ENCODE measurements at regions of chr6 and their contacts with region 1.

Region 1: DNA sequence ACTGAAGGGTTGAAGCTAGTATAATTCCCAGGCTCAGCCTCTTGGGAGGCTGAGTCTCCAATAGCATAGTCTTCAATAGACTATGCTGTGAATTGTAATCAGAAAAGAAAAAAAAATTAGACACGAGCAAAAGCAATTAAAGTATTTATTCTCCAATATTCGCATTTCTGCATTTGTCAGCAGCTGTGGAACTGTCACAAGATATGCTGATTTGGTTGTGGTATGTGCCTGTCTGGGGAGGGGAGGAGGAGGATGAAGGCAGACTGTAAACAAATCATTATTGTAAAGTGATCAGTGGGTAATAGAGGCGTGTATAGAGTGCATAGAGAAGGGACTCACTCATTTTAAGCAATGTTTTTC is 10.1 kb upstream of the BICRAL start:
- DNase-seq: peak; percentile 67
- ATAC-seq: peak; percentile 24
- H3K4me3 Mint-ChIP-seq: peak overlapping the region; percentile 56
- H3K27ac Mint-ChIP-seq: peak overlapping the region; percentile 100
- H3K4me1 Mint-ChIP-seq: peaks cover 55% of the 10 kb centered on the region
- H3K27me3 Mint-ChIP-seq: no peaks in the 10 kb centered on the region

Region 2: GRCh38 chr6:42652024-42652746 is 119.5 kb before region 1 on chr6:
- CTCF ChIA-PET with region 1: no interaction called
- DNase-seq: no peak
- ATAC-seq: no peak
- H3K4me3 Mint-ChIP-seq: no peak overlapping the region
- H3K27ac Mint-ChIP-seq: no peak overlapping the region
- H3K4me1 Mint-ChIP-seq: peaks cover 1% of the 10 kb centered on the region
- H3K27me3 Mint-ChIP-seq: no peaks in the 10 kb centered on the region

Region 3: GRCh38 chr6:42745707-42746462 is 25.8 kb before region 1 on chr6 and contains the start of gene TBCC:
- CTCF ChIA-PET with region 1: interaction called, 42 read pairs
- DNase-seq: peak; percentile 98
- ATAC-seq: peak; percentile 86
- H3K4me3 Mint-ChIP-seq: peak within 1 kb of the TSS; percentile 91
- H3K27ac Mint-ChIP-seq: peak within 1 kb of the TSS; percentile 100
- H3K4me1 Mint-ChIP-seq: peaks cover 31% of the 10 kb centered on the region
- H3K27me3 Mint-ChIP-seq: no peaks in the 10 kb centered on the region
- total RNA-seq, gene TBCC: 29.8 to 35.5 TPM

Region 4: GRCh38 chr6:42782622-42783176 is 11.0 kb after region 1 on chr6:
- CTCF ChIA-PET with region 1: interaction called, 37 read pairs
- DNase-seq: peak; percentile 71
- ATAC-seq: peak; percentile 42
- H3K4me3 Mint-ChIP-seq: peak overlapping the region; percentile 93
- H3K27ac Mint-ChIP-seq: peak overlapping the region; percentile 96
- H3K4me1 Mint-ChIP-seq: peaks cover 35% of the 10 kb centered on the region
- H3K27me3 Mint-ChIP-seq: no peaks in the 10 kb centered on the region

Measured in activated CD8-positive, alpha-beta memory T cell treated with anti-CD3 and anti-CD28 coated beads, Interleukin-2, amount 10 ng/mL, durations not matched to agents 7 days and 5 days (primary cell).